ENCODE measurements at regions of chr12 and their contacts with region 1.

Region 1: GRCh38 chr12:64610149-64610678 is at the start of gene RASSF3:
- DNase-seq: peak; percentile 82 to 91 (median 84)
- ATAC-seq: peak; percentile 38 to 93 (median 84)
- H3K4me3 ChIP-seq: peak within 1 kb of the TSS; percentile 67 to 99 (median 96)
- H3K27ac ChIP-seq: peak within 1 kb of the TSS; percentile 90 to 99 (median 97)
- H3K4me1 ChIP-seq: peaks cover 0 to 33% (median 20%) of the 10 kb centered on the region in 12 donors
- H3K27me3 ChIP-seq: no peaks in the 10 kb centered on the region
- CTCF ChIP-seq: no peak
- POLR2A ChIP-seq: peak in 1 of 2 donors; percentile 71
- total RNA-seq, gene RASSF3: 59.7 to 116 (median 93.4) TPM

Region 2: GRCh38 chr12:64451687-64452558 is 158.3 kb before region 1 on chr12 and contains the start of gene TBK1:
- intact Hi-C with region 1: loop called in 1 of 10 experiments (anchors 10 kb)
- DNase-seq: peak; percentile 90 to 94 (median 92)
- ATAC-seq: peak; percentile 89 to 98 (median 96)
- H3K4me3 ChIP-seq: peak within 1 kb of the TSS; percentile 69 to 100 (median 93)
- H3K27ac ChIP-seq: peak within 1 kb of the TSS; percentile 84 to 99 (median 95)
- H3K4me1 ChIP-seq: peaks cover 0 to 42% (median 16%) of the 10 kb centered on the region in 12 donors
- H3K27me3 ChIP-seq: no peaks in the 10 kb centered on the region
- CTCF ChIP-seq: peak in 3 of 12 donors; percentile 10 to 39 (median 23)
- POLR2A ChIP-seq: peak; percentile 7 to 84
- total RNA-seq, gene TBK1: 8.5 to 16.9 (median 10.9) TPM

Region 3: GRCh38 chr12:64566732-64567399 is 43.3 kb before region 1 on chr12:
- intact Hi-C with region 1: loop called in 4 of 10 experiments (anchors 2 to 5 kb)
- DNase-seq: no peak
- ATAC-seq: no peak
- H3K4me3 ChIP-seq: no peak overlapping the region
- H3K27ac ChIP-seq: no peak overlapping the region
- H3K4me1 ChIP-seq: peaks cover 0 to 43% (median 18%) of the 10 kb centered on the region in 12 donors
- H3K27me3 ChIP-seq: no peaks in the 10 kb centered on the region
- CTCF ChIP-seq: no peak
- POLR2A ChIP-seq: no peak

Region 4: GRCh38 chr12:64669270-64669842 is 59.1 kb after region 1 on chr12:
- intact Hi-C with region 1: loop called in 6 of 10 experiments (anchors 5 kb)
- DNase-seq: peak; percentile 64 to 80 (median 68)
- ATAC-seq: peak; percentile 39 to 71 (median 48)
- H3K4me3 ChIP-seq: peak overlapping the region in 5 of 12 donors; percentile 0 to 25 (median 4)
- H3K27ac ChIP-seq: peak overlapping the region; percentile 48 to 89 (median 76)
- H3K4me1 ChIP-seq: peaks cover 18 to 100% (median 93%) of the 10 kb centered on the region in 12 donors
- H3K27me3 ChIP-seq: no peaks in the 10 kb centered on the region
- CTCF ChIP-seq: no peak
- POLR2A ChIP-seq: no peak

Region 5: DNA sequence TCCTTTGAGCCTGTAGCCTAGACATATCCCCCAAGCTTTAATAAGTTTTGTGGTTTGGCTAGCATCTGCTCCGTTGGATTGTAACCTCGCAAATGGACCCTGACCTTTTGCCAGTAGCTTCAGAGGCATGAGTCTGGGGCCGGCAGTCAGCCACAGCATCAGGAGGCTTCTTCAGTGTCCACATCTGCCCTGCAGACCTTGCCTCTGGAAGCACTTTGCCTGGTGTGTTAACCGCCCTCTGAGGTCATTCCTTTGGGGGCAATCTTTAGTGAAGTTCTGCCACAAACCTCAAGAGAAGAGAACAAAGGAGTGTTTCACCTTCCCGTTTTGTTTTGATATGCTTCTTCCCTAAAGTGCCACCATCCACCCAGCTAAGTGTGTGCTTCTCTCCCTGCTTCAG is 77.6 kb after region 1 on chr12:
- intact Hi-C with region 1: loop called in 4 of 10 experiments (anchors 2 to 5 kb)
- DNase-seq: no peak
- ATAC-seq: peak in 3 of 4 donors; percentile 8 to 38 (median 11)
- H3K4me3 ChIP-seq: no peak overlapping the region
- H3K27ac ChIP-seq: peak overlapping the region in 11 of 12 donors; percentile 22 to 88 (median 48)
- H3K4me1 ChIP-seq: peaks cover 0 to 70% (median 34%) of the 10 kb centered on the region in 12 donors
- H3K27me3 ChIP-seq: no peaks in the 10 kb centered on the region
- CTCF ChIP-seq: no peak
- POLR2A ChIP-seq: no peak